Common myeloid progenitor, CD34-positive (primary cell): ENCODE measurements at regions of chr20 and their contacts with region 1.

Region 1: DNA sequence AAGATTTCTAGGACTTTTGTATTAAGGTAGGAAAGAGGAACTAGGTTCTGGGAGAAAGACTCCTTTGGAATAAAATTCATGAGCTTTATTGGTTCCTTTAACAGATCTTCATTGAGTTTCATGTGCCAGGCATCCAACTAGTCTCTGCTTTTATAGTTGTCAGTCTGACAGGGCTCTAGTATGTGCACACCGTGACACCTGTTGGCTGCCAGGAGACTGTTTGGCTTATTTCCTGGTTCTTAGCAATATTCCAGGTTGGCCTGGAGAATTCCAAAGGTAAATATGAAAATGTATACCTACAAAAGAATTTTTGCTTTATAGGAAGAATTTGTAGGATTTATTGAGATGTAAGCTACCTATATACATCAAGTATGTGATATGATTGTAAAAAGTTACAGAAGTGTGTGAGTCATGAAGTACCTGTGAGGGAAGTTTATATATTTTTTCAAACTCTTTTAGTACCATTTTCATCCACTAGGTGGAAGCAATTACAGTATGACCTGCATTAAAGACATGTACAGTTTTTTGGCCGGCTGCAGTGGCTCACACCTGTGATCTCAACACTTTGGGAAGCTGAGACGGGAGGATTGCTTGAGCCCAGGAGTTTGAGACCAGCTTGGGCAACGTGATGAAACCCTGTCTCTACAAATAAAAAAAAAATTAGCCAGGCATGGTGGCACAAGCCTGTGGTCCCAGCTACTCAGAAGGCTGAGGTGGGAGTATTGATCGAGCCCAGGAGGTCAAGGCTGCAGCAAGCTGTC is 35.2 kb downstream of the NDUFAF5 start:
- DNase-seq: peak; percentile 52 to 70 (median 67)
- H3K4me3 ChIP-seq: no peak overlapping the region
- H3K27ac ChIP-seq: no peak overlapping the region
- H3K4me1 ChIP-seq: no peaks in the 10 kb centered on the region
- H3K27me3 ChIP-seq: no peaks in the 10 kb centered on the region

Region 2: DNA sequence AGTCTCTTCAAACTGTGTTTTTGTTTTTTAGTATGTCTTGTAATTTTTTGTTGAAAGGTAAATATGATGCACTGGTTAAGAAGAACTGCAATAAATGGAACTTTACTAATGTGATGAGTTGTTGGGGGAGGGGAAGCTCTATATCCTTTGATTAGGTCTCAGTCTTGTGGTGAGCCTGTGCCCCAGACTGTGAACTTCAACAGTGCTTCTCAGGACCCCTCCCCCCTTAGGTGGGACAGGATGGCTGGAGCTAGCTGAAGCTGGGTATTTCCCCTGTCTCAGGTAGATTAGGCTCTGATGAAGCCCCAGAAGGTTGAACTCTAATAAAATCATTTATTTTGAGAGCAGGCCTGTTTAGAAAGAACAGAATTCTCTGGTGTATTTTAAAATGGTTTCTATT is 149.9 kb before region 1 on chr20:
- CTCF ChIA-PET with region 1: no interaction called
- POLR2A ChIA-PET with region 1: no interaction called
- DNase-seq: no peak
- H3K4me3 ChIP-seq: no peak overlapping the region
- H3K27ac ChIP-seq: no peak overlapping the region
- H3K4me1 ChIP-seq: no peaks in the 10 kb centered on the region
- H3K27me3 ChIP-seq: peaks cover 0 to 2% (median 0%) of the 10 kb centered on the region in 5 experiments

Region 3: GRCh38 chr20:14055127-14055742 is 235.2 kb after region 1 on chr20:
- CTCF ChIA-PET with region 1: interaction called, 18 read pairs
- POLR2A ChIA-PET with region 1: no interaction called
- DNase-seq: peak; percentile 57 to 77 (median 71)
- H3K4me3 ChIP-seq: no peak overlapping the region
- H3K27ac ChIP-seq: no peak overlapping the region
- H3K4me1 ChIP-seq: no peaks in the 10 kb centered on the region
- H3K27me3 ChIP-seq: peaks cover 0 to 7% (median 0%) of the 10 kb centered on the region in 5 experiments

Region 4: DNA sequence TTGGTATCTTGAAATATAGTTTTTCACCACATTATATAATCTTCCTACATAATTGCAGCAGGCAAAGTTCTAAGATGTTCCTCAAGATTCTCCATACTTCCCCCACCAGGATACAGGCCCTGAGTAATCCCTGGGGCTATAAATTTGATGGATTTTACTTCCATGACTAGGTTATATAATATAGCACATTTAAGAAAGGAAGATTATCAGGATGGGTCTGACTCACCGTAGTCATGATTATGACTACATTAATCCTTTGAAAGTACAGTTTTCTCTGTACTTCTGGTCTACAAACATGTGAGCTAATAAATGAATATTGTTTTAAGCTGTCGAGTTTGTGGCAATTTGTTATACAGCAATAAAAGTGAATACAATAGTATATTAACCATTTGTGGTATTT is 297.7 kb after region 1 on chr20:
- CTCF ChIA-PET with region 1: no interaction called
- POLR2A ChIA-PET with region 1: no interaction called
- DNase-seq: no peak
- H3K4me3 ChIP-seq: no peak overlapping the region
- H3K27ac ChIP-seq: no peak overlapping the region
- H3K4me1 ChIP-seq: no peaks in the 10 kb centered on the region
- H3K27me3 ChIP-seq: peaks cover 0 to 3% (median 0%) of the 10 kb centered on the region in 5 experiments